ENCODE measurements at regions of chr14 and their contacts with region 1.

Region 1: GRCh38 chr14:69611201-69612011 is at the start of gene SUSD6:
- DNase-seq: peak; percentile 79 to 96 (median 91)

Region 2: GRCh38 chr14:69685716-69686115 is 74.3 kb after region 1 on chr14:
- intact Hi-C with region 1: loop called (anchors 5 kb)
- DNase-seq: peak; percentile 47 to 90 (median 77)

Region 3: DNA sequence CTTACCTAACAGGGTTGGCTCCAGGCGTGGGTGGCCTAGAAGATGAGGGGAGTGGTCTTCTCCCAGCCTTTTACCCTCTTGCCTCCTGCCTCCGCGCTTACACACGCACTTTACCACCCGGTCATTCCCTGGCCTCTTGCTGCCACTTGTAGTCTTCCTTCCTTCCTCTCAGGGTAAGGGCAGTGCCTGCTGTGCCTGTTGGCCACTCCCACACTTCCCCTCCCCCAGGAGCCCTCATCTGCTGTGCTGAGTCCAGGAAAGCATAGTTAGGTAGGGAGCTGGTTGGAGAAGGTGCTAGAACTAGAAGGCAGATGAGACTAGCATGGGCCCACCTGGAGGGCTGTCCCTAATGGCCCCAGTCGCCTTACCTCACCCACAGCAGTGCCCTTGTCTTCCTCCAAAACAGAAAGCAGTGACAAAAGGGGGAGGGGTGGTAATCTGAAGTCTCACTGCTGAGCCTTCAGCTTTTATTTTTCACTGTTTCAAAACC is 101.2 kb after region 1 on chr14:
- intact Hi-C with region 1: loop called (anchors 5 kb)
- DNase-seq: peak in 2 of 42 donors; percentile 21 to 54

Region 4: DNA sequence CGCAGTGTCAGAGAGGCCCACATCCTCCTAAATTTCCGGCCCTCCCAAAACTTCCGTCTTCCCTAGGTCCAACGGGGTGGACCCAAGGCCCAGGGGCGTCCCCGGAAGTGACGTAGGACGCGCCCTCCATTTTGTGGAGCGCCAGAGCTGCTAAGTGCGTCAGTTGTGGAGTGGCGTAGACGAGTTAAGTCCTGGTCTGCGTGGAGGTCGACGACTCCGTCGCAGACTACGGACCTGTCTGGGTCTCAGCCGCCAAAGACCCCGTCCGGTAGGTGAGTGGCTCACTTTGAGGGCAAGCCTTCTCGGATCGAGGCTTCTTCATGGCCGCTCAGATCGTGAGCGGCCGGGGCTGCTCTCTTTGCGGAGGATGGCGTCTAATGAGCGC is 155.6 kb after region 1 on chr14 and contains the start of gene SRSF5:
- intact Hi-C with region 1: loop called (anchors 5 kb)
- DNase-seq: peak; percentile 92 to 99 (median 97)

Measured in head of caudate nucleus (tissue), 42 donors.